OCI-LY7 (cell line): ENCODE measurements at regions of chr7 and their contacts with region 1.

Region 1: DNA sequence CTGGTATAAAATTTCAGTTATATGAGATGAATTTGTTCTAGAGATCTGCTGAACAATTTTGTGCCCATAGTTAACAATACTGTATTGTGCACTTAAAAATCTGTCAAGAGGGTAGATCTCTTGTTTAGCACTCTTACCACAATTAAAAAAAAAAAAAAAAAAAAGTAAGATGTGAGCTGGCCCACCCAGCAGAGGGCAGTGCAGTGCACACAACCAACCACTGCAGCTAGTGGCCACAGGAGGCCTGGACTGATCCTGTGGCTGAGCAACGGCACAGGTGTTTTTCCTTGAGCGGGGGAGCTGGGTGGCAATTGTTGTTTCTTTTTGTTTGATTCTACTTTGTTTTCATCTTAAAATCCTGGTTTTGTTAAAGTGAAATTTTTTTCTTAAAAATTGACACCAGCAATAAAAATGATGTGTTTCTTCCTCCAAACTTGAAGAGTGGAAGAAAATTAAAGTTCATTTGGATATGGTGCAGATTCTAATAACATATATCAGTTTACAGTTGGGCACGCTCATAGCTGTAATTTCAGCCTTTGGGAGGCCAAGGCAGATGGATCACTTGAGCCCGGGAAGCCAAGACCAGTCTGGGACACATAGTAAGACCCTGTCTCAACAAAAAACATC is 171.1 kb upstream of the TBX20 start:
- DNase-seq: peak; percentile 68
- H3K4me3 ChIP-seq: no peak overlapping the region
- H3K27ac ChIP-seq: no peak overlapping the region
- H3K4me1 ChIP-seq: no peaks in the 10 kb centered on the region
- CTCF ChIP-seq: peak; percentile 92

Region 2: GRCh38 chr7:35482241-35482640 is 57.3 kb after region 1 on chr7:
- CTCF ChIA-PET with region 1: no interaction called
- POLR2A ChIA-PET with region 1: no interaction called
- intact Hi-C with region 1: no loop called
- DNase-seq: no peak
- H3K4me3 ChIP-seq: no peak overlapping the region
- H3K27ac ChIP-seq: no peak overlapping the region
- H3K4me1 ChIP-seq: no peaks in the 10 kb centered on the region
- CTCF ChIP-seq: no peak

Region 3: DNA sequence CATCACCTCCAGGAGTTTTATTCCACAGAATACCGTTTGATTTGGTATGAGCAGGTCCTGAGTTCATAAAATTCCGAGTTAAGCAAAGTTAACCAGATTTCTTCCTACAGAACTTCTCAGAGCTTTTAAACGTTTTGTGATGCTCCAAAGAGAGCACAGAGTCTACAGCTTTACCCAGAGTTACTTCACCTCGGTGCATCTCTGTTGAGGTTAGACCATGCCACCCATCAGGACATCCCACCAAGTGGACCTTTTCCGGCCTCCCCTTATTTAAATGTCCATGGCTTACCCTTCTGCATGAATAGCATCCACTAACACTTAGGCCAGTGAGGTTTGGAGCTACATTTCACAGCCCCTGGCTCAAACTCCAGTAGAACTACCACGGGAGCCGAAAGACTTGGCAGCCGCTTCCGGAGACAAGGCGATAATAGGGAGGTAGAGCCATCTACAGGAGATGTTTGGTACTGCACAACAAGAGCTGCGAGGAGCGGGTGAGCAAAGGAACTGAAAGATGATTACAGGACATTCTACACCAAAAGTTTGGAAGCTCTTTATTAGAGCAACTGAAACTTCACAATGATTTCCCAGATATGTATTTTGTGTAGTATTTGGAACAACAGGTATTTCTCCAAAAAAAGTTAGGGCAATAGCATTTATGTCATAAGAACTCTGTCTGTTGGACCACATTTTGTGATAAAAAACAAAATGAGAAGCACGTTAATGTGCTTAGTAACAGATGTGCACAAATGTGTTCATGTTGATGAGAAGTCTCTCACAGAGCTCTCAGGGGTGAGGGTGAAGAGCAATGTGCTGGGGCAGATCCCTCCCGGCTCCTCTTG is 95.2 kb after region 1 on chr7:
- CTCF ChIA-PET with region 1: interaction called, 3 read pairs
- POLR2A ChIA-PET with region 1: no interaction called
- intact Hi-C with region 1: loop called (anchors 1 kb)
- DNase-seq: peak; percentile 65
- H3K4me3 ChIP-seq: no peak overlapping the region
- H3K27ac ChIP-seq: no peak overlapping the region
- H3K4me1 ChIP-seq: no peaks in the 10 kb centered on the region
- CTCF ChIP-seq: peak; percentile 97

Region 4: GRCh38 chr7:35537067-35538023 is 112.4 kb after region 1 on chr7:
- CTCF ChIA-PET with region 1: interaction called, 3 read pairs
- POLR2A ChIA-PET with region 1: no interaction called
- intact Hi-C with region 1: loop called (anchors 1 kb)
- DNase-seq: peak; percentile 77
- H3K4me3 ChIP-seq: peak overlapping the region; percentile 54
- H3K27ac ChIP-seq: no peak overlapping the region
- H3K4me1 ChIP-seq: no peaks in the 10 kb centered on the region
- CTCF ChIP-seq: peak; percentile 89

Region 5: GRCh38 chr7:35624299-35625186 is 199.6 kb after region 1 on chr7:
- CTCF ChIA-PET with region 1: no interaction called
- POLR2A ChIA-PET with region 1: no interaction called
- intact Hi-C with region 1: loop called (anchors 2 kb)
- DNase-seq: peak; percentile 62
- H3K4me3 ChIP-seq: no peak overlapping the region
- H3K27ac ChIP-seq: no peak overlapping the region
- H3K4me1 ChIP-seq: no peaks in the 10 kb centered on the region
- CTCF ChIP-seq: peak; percentile 93